ENCODE measurements at regions of chr10 and their contacts with region 1.

Region 1: GRCh38 chr10:88525371-88526079 is 57.6 kb downstream of the RNLS start:
- DNase-seq: peak; percentile 96
- H3K4me3 Mint-ChIP-seq: no peak overlapping the region
- H3K27ac Mint-ChIP-seq: no peak overlapping the region
- H3K4me1 Mint-ChIP-seq: peaks cover 36% of the 10 kb centered on the region
- H3K27me3 Mint-ChIP-seq: no peaks in the 10 kb centered on the region
- CTCF ChIP-seq: no peak

Region 2: DNA sequence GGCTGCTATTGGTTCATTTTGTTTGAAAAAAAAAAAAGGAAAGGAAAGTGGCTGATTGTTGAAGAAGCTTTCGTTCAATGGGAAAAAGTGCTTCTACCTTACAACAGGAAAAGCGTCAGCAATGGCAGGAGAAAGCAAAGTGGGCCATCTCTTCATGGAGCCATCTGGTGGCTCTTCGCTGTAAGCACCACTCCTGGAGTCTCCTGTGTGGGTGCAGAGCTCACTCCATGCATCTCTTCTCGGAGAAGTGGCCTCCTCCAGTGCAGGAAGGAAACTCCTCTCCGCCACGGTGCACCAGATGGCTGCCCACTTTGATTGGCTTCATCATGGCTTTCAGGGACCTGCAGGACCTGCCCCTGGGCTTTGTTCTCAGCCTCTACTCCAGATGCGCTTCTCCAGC is 411.2 kb before region 1 on chr10:
- CTCF ChIA-PET with region 1: no interaction called
- POLR2A ChIA-PET with region 1: no interaction called
- intact Hi-C with region 1: no loop called
- DNase-seq: peak; percentile 50
- H3K4me3 Mint-ChIP-seq: no peak overlapping the region
- H3K27ac Mint-ChIP-seq: no peak overlapping the region
- H3K4me1 Mint-ChIP-seq: peaks cover 11% of the 10 kb centered on the region
- H3K27me3 Mint-ChIP-seq: no peaks in the 10 kb centered on the region
- CTCF ChIP-seq: no peak

Region 3: GRCh38 chr10:88473989-88474883 is 51.3 kb before region 1 on chr10:
- CTCF ChIA-PET with region 1: interaction called, 3 read pairs
- POLR2A ChIA-PET with region 1: interaction called, 52 read pairs
- intact Hi-C with region 1: no loop called
- DNase-seq: peak; percentile 95
- H3K4me3 Mint-ChIP-seq: peak overlapping the region; percentile 13
- H3K27ac Mint-ChIP-seq: peak overlapping the region; percentile 80
- H3K4me1 Mint-ChIP-seq: peaks cover 39% of the 10 kb centered on the region
- H3K27me3 Mint-ChIP-seq: no peaks in the 10 kb centered on the region
- CTCF ChIP-seq: no peak

Region 4: DNA sequence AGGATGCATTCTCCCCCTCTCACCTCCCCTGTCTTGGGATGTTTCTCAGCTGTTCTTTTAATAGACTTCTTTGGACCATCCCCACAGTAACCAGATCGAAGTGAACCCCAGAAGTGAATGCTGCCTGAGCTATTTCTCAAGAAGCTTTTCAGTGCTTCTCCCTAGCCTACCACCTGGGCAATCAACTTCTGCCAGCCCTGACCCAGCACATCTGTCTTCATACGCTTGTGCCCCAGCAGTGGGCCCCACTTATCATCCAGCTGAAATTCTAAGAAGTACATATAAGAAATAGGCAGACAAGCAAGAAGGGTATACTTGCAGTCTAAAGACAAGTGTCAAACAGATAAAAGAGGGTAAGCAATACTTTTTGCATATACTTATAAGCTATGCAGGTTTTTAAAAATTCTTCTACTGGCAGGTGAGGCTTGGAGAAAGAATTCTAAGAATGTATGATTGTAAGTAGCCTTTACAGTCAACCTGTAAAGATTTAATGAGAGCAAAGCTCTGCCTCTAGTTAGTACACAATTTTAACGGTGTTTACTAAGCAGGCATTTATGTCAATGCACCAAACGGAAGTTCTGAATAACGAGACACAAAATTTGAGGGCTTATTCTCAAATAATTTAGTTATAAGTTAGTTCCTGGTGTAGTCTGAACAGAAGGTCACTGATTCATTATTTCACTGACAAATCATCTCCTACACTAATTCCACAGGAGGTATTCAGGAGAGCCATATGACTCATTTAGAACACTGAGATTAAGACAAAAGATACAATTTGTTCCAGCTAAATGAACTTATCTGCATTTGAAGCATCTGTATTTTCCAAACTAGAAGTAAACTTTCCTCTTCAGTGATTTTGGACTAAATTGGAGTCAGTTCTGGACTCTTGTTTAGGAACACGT is 25.7 kb before region 1 on chr10:
- CTCF ChIA-PET with region 1: no interaction called
- POLR2A ChIA-PET with region 1: interaction called, 20 read pairs
- intact Hi-C with region 1: no loop called
- DNase-seq: peak; percentile 39
- H3K4me3 Mint-ChIP-seq: peak overlapping the region; percentile 10
- H3K27ac Mint-ChIP-seq: no peak overlapping the region
- H3K4me1 Mint-ChIP-seq: peaks cover 19% of the 10 kb centered on the region
- H3K27me3 Mint-ChIP-seq: no peaks in the 10 kb centered on the region
- CTCF ChIP-seq: no peak

Region 5: DNA sequence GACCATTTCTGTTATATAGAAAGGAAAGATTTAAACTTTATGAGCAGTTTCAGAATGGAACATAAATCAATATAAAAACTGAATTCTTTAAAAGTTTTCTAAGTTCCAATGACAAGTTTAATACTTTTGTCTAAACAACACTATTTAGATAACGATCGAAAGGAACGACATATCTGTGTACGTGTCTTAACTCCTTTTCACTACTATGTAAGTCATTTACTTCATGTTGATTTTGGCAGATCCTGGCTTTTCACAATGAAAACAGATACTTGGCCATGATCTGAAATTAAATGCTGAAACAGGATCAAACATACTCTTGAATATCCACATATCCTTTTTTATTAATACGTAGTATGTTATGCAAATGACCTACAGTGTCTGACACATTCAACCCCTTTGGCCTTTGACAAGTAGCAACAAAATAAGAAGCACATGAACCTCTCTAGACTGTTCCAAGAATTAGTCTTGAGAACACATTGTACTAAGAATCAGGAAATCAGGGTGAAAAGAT is 15.6 kb after region 1 on chr10:
- CTCF ChIA-PET with region 1: interaction called, 3 read pairs
- POLR2A ChIA-PET with region 1: interaction called, 11 read pairs
- intact Hi-C with region 1: no loop called
- DNase-seq: peak; percentile 38
- H3K4me3 Mint-ChIP-seq: peak overlapping the region; percentile 37
- H3K27ac Mint-ChIP-seq: peak overlapping the region; percentile 100
- H3K4me1 Mint-ChIP-seq: peaks cover 30% of the 10 kb centered on the region
- H3K27me3 Mint-ChIP-seq: no peaks in the 10 kb centered on the region
- CTCF ChIP-seq: no peak

Region 6: DNA sequence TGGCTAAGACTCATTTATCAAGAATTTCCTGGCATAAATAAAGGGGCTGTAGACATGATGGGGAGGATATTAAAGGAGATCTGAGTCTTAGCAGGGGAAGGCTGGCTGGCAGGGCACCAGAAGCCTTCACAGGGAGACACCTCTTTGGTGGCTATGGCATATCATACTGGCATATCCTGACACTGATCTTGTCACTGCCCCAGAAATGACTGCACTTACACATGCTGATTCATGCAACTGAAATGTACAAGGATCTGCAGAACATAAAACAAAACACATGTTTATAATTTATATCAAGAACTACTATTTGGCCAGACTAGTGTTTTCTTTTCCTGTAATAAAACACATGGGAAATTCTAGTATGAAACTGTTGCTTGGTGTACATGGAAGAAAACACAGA is 228.8 kb after region 1 on chr10:
- CTCF ChIA-PET with region 1: no interaction called
- POLR2A ChIA-PET with region 1: no interaction called
- intact Hi-C with region 1: no loop called
- DNase-seq: peak; percentile 27
- H3K4me3 Mint-ChIP-seq: no peak overlapping the region
- H3K27ac Mint-ChIP-seq: peak overlapping the region; percentile 65
- H3K4me1 Mint-ChIP-seq: no peaks in the 10 kb centered on the region
- H3K27me3 Mint-ChIP-seq: no peaks in the 10 kb centered on the region
- CTCF ChIP-seq: no peak